ENCODE measurements at regions of chr12 and their contacts with region 1.

Region 1: DNA sequence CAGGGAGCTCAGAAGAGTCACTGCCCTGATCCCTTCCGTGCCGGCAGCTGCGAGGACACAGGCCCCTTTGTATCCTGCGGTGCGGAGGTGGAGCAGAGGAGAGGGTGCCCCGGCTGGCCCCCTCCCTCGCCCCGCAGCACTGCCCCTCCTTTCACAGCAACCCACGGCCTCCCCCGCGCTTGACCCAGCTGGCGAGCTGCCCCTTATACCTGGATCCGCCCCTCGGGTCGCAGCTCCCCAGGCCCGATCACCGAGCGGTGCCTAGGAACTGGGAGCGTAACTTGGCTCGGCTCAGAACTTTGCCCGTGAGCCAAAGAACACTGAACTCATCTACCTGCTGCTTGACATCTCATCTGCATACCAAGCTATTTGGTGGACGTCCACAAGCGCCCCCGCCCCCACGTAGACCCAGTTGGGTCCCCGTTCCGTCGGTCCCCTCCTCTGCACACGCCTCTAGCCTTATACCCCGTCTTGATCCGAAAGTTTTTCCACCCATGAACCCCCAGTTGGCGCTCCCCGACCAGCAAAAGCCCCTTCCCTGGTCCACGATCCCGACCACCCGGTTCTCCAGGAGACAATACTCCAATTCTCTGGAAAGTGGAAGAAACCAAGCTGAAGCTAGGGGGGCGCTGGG is 697 bp upstream of the DNAJC14 start:
- H3K4me3 ChIP-seq: peak overlapping the region; percentile 83
- H3K27ac ChIP-seq: peak overlapping the region; percentile 77
- H3K4me1 ChIP-seq: peaks cover 12% of the 10 kb centered on the region
- CTCF ChIP-seq: no peak; the same call in 1 of the 2 replicates

Region 2: GRCh38 chr12:55365086-55365485 is 465.0 kb before region 1 on chr12:
- CTCF ChIA-PET with region 1: no interaction called
- POLR2A ChIA-PET with region 1: no interaction called
- H3K4me3 ChIP-seq: no peak overlapping the region
- H3K27ac ChIP-seq: no peak overlapping the region
- H3K4me1 ChIP-seq: no peaks in the 10 kb centered on the region
- CTCF ChIP-seq: no peak

Region 3: GRCh38 chr12:55728939-55729823 is 100.9 kb before region 1 on chr12 and contains the start of gene CD63:
- CTCF ChIA-PET with region 1: interaction called, 3 read pairs
- POLR2A ChIA-PET with region 1: interaction called, 11 read pairs
- H3K4me3 ChIP-seq: peak within 1 kb of the TSS; percentile 77
- H3K27ac ChIP-seq: peak within 1 kb of the TSS; percentile 91
- H3K4me1 ChIP-seq: no peaks in the 10 kb centered on the region; the same call in 1 of the 2 replicates
- CTCF ChIP-seq: no peak

Region 4: DNA sequence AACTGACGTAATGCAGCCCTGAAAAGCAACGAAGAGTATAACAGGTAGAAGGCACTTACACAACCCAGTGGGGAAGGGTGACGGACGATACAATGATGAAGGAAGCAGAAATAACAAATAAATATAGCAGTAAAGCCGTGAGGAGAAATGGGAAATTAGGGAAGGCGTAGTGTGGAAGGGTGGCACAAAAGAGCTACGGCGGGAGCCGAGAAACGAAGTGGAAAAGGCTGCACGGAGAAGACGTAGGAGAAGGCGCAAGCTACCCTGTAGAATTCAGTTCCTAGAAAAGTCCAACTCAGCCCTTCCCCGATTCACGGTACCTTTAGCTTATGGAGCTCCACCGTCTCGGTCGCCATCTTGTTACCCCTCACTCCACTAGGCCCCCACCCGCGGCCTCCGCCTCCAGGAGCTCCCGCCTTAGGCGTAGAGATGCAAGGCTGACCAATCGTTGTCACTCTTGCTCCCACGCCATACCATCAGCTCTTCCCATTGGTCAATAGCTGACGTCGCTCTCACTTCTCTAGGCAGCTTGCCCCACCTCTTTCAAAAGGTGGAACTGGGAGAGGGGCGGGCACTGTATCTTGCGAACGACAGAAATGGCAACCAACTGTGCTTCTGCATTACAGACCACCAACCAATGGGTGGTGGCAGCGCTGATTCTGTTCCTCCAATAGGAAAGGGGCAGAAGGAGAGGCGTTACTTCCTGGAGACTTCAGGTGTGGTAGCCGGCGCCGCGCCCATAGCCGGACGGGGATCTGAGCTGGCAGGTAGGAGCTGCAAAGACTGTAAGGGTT is 12.5 kb before region 1 on chr12 and contains the starts of genes ORMDL2 and SARNP:
- CTCF ChIA-PET with region 1: interaction called, 6 read pairs
- POLR2A ChIA-PET with region 1: interaction called, 170 read pairs
- H3K4me3 ChIP-seq: peak within 1 kb of the TSS; percentile 83
- H3K27ac ChIP-seq: peak within 1 kb of the TSS; percentile 72
- H3K4me1 ChIP-seq: peaks cover 6% of the 10 kb centered on the region; the same call in 1 of the 2 replicates
- CTCF ChIP-seq: no peak

Region 5: DNA sequence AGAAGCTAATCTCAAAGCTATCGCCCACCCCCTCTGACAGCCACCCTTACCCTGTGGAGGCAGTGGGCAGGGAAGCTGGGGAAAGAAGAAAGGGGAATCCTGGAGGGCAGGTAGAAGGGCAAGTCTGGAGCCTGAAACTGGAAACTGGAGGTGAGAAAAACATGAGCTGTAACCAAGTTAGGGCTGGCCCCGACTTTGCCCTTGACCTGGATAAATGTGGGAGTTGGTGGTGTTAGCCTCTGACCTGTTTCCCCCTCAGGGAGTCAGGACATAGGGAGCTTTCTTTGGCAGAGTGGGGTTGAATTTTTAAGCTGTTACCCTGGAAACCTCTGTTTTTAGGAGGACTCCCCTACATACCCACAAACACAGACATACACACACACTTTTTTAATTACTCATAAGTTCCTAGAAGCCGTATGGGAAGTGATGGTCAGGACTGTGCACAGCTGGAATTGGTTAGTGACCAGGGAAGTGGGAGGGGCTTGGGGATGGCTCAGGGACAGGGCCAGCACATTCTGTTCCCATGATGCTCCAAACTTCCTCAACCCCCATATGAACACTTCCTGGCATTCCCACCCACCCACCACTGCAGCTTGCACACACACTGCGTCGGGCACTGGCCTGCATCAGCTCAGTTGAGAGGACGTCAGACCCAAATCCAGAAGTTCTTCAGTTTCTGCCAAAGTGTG is 17.7 kb after region 1 on chr12:
- CTCF ChIA-PET with region 1: no interaction called
- POLR2A ChIA-PET with region 1: interaction called, 21 read pairs
- H3K4me3 ChIP-seq: no peak overlapping the region
- H3K27ac ChIP-seq: no peak overlapping the region
- H3K4me1 ChIP-seq: no peaks in the 10 kb centered on the region; the same call in 1 of the 2 replicates
- CTCF ChIP-seq: no peak

Measured in HEK293 (cell line).